ENCODE measurements at regions of chr11 and their contacts with region 1.

Region 1: GRCh38 chr11:75204685-75205563 is 35.6 kb upstream of the TPBGL start:
- DNase-seq: peak; percentile 88
- H3K4me3 ChIP-seq: no peak overlapping the region; a peak in 1 of 4 replicates
- H3K27ac ChIP-seq: no peak overlapping the region
- H3K4me1 ChIP-seq: peaks cover 0 to 9% of the 10 kb centered on the region in 2 experiments; a peak in 1 of 4 replicates
- H3K27me3 ChIP-seq: no peaks in the 10 kb centered on the region; the same call in 1 of the 2 replicates
- CTCF ChIP-seq: peak; percentile 87
- EP300 ChIP-seq: no peak
- RAD21 ChIP-seq: peak; percentile 90

Region 2: DNA sequence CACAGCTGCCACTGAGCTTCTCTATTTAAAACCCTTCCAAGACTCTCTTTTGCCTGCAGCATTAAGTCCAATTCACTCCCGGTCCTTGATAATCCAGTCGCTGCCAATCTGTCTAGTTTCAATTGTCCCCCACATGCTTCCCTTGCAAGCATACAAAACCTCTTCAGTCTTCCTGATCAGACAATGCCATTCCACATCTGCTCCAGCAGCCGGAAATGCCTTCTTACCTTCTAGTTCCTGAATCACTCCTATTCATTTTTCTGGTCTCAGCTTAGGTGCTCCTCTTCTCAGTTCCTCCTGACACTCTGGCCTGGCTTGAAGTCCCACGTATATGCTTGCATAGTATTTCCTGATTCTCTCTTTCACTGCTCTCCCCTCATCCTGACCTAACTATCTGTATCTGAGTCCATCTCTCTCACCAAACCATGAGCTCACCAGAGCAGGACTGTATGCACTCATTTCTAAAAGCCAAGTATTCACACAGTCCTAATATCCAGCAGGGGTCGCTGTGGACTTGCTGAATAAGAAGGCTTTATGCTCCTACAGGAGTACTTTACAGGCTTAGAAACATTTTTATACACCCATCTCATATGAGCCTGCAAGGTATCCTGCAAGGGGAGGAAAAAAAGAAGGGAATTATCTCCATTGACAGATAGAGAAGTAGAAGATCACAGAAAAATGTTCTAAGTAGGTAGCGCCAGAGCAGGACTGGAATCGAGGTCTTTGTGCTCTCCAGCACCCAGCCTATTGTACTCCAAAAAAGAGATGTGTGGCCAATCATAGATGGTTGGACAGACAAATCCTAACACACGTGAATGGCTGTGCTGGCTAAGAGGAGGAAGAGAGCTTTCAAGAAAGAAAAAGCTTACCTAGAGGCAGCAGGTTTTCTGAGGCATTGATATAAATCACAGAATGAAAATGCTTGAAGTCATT is 275.2 kb before region 1 on chr11:
- CTCF ChIA-PET with region 1: interaction called, 10 read pairs
- POLR2A ChIA-PET with region 1: no interaction called
- DNase-seq: peak; percentile 58
- H3K4me3 ChIP-seq: no peak overlapping the region
- H3K27ac ChIP-seq: no peak overlapping the region; a peak in 1 of 4 replicates
- H3K4me1 ChIP-seq: peaks cover 0 to 12% of the 10 kb centered on the region in 2 experiments; a peak in 2 of 4 replicates
- H3K27me3 ChIP-seq: no peaks in the 10 kb centered on the region
- CTCF ChIP-seq: peak; percentile 95
- EP300 ChIP-seq: no peak
- RAD21 ChIP-seq: peak; percentile 93

Region 3: GRCh38 chr11:75031771-75032549 is 173.0 kb before region 1 on chr11:
- CTCF ChIA-PET with region 1: interaction called, 12 read pairs
- POLR2A ChIA-PET with region 1: no interaction called
- DNase-seq: peak; percentile 68
- H3K4me3 ChIP-seq: no peak overlapping the region
- H3K27ac ChIP-seq: peak overlapping the region in 1 of 2 experiments; percentile 52; a peak in 2 of 4 replicates
- H3K4me1 ChIP-seq: peaks cover 6 to 11% of the 10 kb centered on the region in 2 experiments; a peak in 2 of 4 replicates
- H3K27me3 ChIP-seq: no peaks in the 10 kb centered on the region
- CTCF ChIP-seq: peak; percentile 73
- EP300 ChIP-seq: no peak
- RAD21 ChIP-seq: peak; percentile 75

Region 4: DNA sequence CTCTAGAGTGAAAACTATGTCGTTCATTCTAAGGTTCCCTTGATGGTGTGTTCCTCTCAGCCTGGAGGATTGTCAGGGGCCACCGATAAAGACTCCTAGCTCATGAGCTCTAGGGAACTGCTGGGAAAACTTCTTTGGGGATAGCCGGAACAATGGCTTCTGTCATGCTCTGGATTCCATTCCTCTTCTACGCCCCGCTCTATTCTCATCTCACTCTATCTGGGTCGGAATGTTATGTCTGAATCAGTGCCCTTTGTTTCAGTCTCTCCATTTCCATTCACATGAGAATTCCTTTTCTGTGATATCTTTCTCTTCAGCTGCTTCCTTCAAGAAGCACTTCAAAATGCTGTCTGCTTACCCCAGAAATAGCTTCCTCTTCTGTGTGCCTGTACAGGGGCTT is 70.9 kb before region 1 on chr11:
- CTCF ChIA-PET with region 1: interaction called, 630 read pairs
- POLR2A ChIA-PET with region 1: no interaction called
- DNase-seq: no peak
- H3K4me3 ChIP-seq: no peak overlapping the region
- H3K27ac ChIP-seq: no peak overlapping the region
- H3K4me1 ChIP-seq: no peaks in the 10 kb centered on the region; a peak in 1 of 4 replicates
- H3K27me3 ChIP-seq: peaks cover 13% of the 10 kb centered on the region; the same call in 1 of the 2 replicates
- CTCF ChIP-seq: no peak
- EP300 ChIP-seq: no peak
- RAD21 ChIP-seq: no peak

Region 5: GRCh38 chr11:75233742-75234172 is 28.8 kb after region 1 on chr11:
- CTCF ChIA-PET with region 1: interaction called, 362 read pairs
- POLR2A ChIA-PET with region 1: no interaction called
- DNase-seq: no peak
- H3K4me3 ChIP-seq: no peak overlapping the region
- H3K27ac ChIP-seq: no peak overlapping the region
- H3K4me1 ChIP-seq: peaks cover 0 to 2% of the 10 kb centered on the region in 2 experiments; a peak in 1 of 4 replicates
- H3K27me3 ChIP-seq: no peaks in the 10 kb centered on the region
- CTCF ChIP-seq: no peak
- EP300 ChIP-seq: no peak
- RAD21 ChIP-seq: no peak

Region 6: GRCh38 chr11:75351791-75352587 is 147.1 kb after region 1 on chr11:
- CTCF ChIA-PET with region 1: no interaction called
- POLR2A ChIA-PET with region 1: no interaction called
- DNase-seq: peak; percentile 92
- H3K4me3 ChIP-seq: peak overlapping the region; percentile 64 to 73
- H3K27ac ChIP-seq: peak overlapping the region in 1 of 2 experiments; percentile 96; a peak in 2 of 4 replicates
- H3K4me1 ChIP-seq: peaks cover 23 to 48% of the 10 kb centered on the region in 2 experiments; a peak in 3 of 4 replicates
- H3K27me3 ChIP-seq: no peaks in the 10 kb centered on the region
- CTCF ChIP-seq: no peak
- EP300 ChIP-seq: no peak
- RAD21 ChIP-seq: peak; percentile 35

Measured in SK-N-SH (cell line).